ENCODE measurements at regions of chr9 and their contacts with region 1.

Region 1: DNA sequence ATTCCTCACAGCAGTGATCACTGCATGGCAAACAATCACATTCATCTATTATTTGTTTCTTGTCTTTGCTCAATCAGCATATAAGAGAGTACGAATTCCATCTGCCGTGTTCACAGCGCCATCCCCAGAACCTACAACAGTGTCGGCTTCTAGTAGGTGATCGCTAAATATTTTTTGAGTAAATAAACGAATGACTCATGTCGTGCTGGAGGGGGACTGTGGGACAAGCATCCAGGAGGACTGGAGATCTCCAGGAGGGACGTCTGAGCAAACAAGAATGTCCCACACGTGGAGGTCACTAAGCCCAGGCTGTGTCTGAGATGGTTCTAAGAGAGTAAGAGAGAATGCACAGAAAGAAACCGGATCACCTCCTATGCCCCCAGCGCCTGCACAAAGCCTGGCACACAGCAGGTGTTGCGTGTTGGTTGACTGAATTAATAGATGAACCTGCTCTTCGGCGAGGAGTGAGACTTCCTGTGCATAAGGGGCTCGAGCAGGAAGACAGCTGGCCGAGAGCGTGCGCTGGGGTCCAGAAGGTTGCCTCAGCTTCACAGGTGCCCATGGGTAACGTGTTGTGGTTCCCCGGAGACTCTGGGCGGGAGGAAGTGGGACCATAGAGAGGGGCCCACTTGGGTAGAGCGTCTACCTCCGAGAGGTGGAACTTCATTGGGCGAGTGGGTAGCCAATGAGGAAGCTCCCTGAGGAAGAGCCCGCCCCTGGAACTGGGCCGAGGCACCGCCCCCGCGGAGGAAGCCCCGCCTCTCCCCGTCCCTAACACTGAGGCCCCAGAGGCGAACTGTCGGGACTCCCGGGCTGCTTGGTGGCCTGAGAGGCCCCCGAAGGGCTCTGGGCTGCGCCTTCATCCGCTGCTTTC is 193.0 kb downstream of the MELK start:
- DNase-seq: peak; percentile 77 to 95 (median 90)
- ATAC-seq: peak; percentile 99
- H3K4me3 ChIP-seq: peak overlapping the region; percentile 63
- H3K4me3 Mint-ChIP-seq: no peak overlapping the region
- H3K27ac ChIP-seq: peak overlapping the region in 1 of 2 donors; percentile 40
- H3K27ac Mint-ChIP-seq: no peak overlapping the region
- H3K4me1 ChIP-seq: peaks cover 17% of the 10 kb centered on the region
- H3K4me1 Mint-ChIP-seq: no peaks in the 10 kb centered on the region
- H3K27me3 ChIP-seq: peaks cover 2 to 3% of the 10 kb centered on the region in 2 experiments
- H3K27me3 Mint-ChIP-seq: peaks cover 16% of the 10 kb centered on the region
- CTCF ChIP-seq: no peak

Region 2: DNA sequence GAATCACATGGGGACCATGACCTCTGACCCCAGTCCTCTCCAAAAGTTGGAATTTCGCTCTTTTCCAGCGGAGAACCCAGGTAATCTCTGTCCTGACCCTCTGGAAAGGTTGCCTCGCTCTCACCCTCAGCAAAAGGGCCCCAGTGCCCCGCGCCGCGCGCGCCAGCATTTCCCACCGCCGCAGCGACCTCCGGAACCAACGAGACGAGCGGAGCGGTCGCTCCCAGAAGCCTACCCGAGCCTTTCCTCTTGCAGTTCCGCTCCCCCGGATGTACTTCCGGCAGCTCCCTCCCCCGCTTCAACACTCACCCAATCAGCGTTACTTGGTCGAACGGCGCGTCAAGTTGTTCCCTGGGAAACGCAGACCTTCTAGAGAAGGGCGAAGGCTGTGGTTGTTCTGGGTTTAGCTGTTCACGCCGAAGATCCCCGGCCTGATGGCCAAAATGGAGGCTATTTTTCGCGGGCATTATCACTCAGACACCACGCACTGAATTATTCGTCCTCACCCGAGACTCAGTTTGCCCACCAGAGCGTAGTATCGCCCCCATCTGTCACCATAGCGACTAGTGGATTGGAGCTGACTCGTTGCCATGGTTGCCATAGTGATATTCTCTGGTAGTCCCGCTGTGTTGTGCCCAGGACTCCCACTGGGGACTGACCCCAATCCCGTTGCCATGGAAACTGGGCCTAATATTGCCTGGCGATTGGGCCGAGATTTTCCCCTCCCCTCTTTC is 1662.6 kb before region 1 on chr9 and contains the start of gene STOML2:
- CTCF ChIA-PET with region 1: no interaction called
- POLR2A ChIA-PET with region 1: no interaction called
- intact Hi-C with region 1: loop called in 1 of 2 experiments (anchors 10 kb)
- DNase-seq: peak; percentile 84 to 97 (median 90)
- ATAC-seq: peak; percentile 98
- H3K4me3 ChIP-seq: peak within 1 kb of the TSS; percentile 99
- H3K4me3 Mint-ChIP-seq: peak within 1 kb of the TSS; percentile 92
- H3K27ac ChIP-seq: peak within 1 kb of the TSS; percentile 77 to 94
- H3K27ac Mint-ChIP-seq: peak within 1 kb of the TSS; percentile 89
- H3K4me1 ChIP-seq: peaks cover 28% of the 10 kb centered on the region
- H3K4me1 Mint-ChIP-seq: peaks cover 36% of the 10 kb centered on the region
- H3K27me3 ChIP-seq: no peaks in the 10 kb centered on the region
- H3K27me3 Mint-ChIP-seq: no peaks in the 10 kb centered on the region
- CTCF ChIP-seq: no peak
- total RNA-seq, gene STOML2: 29.8 to 30.5 TPM

Region 3: GRCh38 chr9:36036780-36037548 is 728.7 kb before region 1 on chr9 and contains the start of gene RECK:
- CTCF ChIA-PET with region 1: no interaction called
- POLR2A ChIA-PET with region 1: no interaction called
- intact Hi-C with region 1: loop called in 1 of 2 experiments (anchors 5 kb)
- DNase-seq: peak; percentile 68 to 92 (median 84)
- ATAC-seq: peak; percentile 94
- H3K4me3 ChIP-seq: peak within 1 kb of the TSS; percentile 85
- H3K4me3 Mint-ChIP-seq: peak within 1 kb of the TSS; percentile 94
- H3K27ac ChIP-seq: no peak within 1 kb of the TSS
- H3K27ac Mint-ChIP-seq: peak within 1 kb of the TSS; percentile 44
- H3K4me1 ChIP-seq: peaks cover 22% of the 10 kb centered on the region
- H3K4me1 Mint-ChIP-seq: peaks cover 45% of the 10 kb centered on the region
- H3K27me3 ChIP-seq: no peaks in the 10 kb centered on the region
- H3K27me3 Mint-ChIP-seq: no peaks in the 10 kb centered on the region
- CTCF ChIP-seq: no peak
- total RNA-seq, gene RECK: 9.3 to 9.8 TPM

Region 4: GRCh38 chr9:37119907-37120842 is 354.5 kb after region 1 on chr9 and contains the start of gene ZCCHC7:
- CTCF ChIA-PET with region 1: no interaction called
- POLR2A ChIA-PET with region 1: interaction called, 4 read pairs
- intact Hi-C with region 1: loop called in 1 of 2 experiments (anchors 10 kb)
- DNase-seq: peak; percentile 95 to 98 (median 97)
- ATAC-seq: peak; percentile 95
- H3K4me3 ChIP-seq: peak within 1 kb of the TSS; percentile 79
- H3K4me3 Mint-ChIP-seq: peak within 1 kb of the TSS; percentile 95
- H3K27ac ChIP-seq: peak within 1 kb of the TSS; percentile 87 to 94
- H3K27ac Mint-ChIP-seq: peak within 1 kb of the TSS; percentile 92
- H3K4me1 ChIP-seq: peaks cover 21% of the 10 kb centered on the region
- H3K4me1 Mint-ChIP-seq: peaks cover 42% of the 10 kb centered on the region
- H3K27me3 ChIP-seq: no peaks in the 10 kb centered on the region
- H3K27me3 Mint-ChIP-seq: no peaks in the 10 kb centered on the region
- CTCF ChIP-seq: no peak
- total RNA-seq, gene ZCCHC7: 40.7 to 41.0 TPM

Region 5: GRCh38 chr9:37422289-37423104 is 656.8 kb after region 1 on chr9 and contains the start of gene GRHPR:
- CTCF ChIA-PET with region 1: no interaction called
- POLR2A ChIA-PET with region 1: no interaction called
- intact Hi-C with region 1: loop called in 1 of 2 experiments (anchors 5 kb)
- DNase-seq: peak; percentile 80 to 95 (median 88)
- ATAC-seq: peak; percentile 99
- H3K4me3 ChIP-seq: peak within 1 kb of the TSS; percentile 86
- H3K4me3 Mint-ChIP-seq: peak within 1 kb of the TSS; percentile 96
- H3K27ac ChIP-seq: peak within 1 kb of the TSS; percentile 73 to 80
- H3K27ac Mint-ChIP-seq: peak within 1 kb of the TSS; percentile 90
- H3K4me1 ChIP-seq: peaks cover 34% of the 10 kb centered on the region
- H3K4me1 Mint-ChIP-seq: peaks cover 28% of the 10 kb centered on the region
- H3K27me3 ChIP-seq: no peaks in the 10 kb centered on the region
- H3K27me3 Mint-ChIP-seq: no peaks in the 10 kb centered on the region
- CTCF ChIP-seq: no peak
- total RNA-seq, gene GRHPR: 29.0 to 29.6 TPM

Region 6: GRCh38 chr9:37903647-37904444 is 1138.1 kb after region 1 on chr9 and contains the start of gene SLC25A51:
- CTCF ChIA-PET with region 1: no interaction called
- POLR2A ChIA-PET with region 1: no interaction called
- intact Hi-C with region 1: loop called in 1 of 2 experiments (anchors 5 kb)
- DNase-seq: peak; percentile 93 to 98 (median 95)
- ATAC-seq: peak; percentile 87
- H3K4me3 ChIP-seq: peak within 1 kb of the TSS; percentile 61
- H3K4me3 Mint-ChIP-seq: peak within 1 kb of the TSS; percentile 100
- H3K27ac ChIP-seq: peak within 1 kb of the TSS; percentile 57 to 70
- H3K27ac Mint-ChIP-seq: peak within 1 kb of the TSS; percentile 97
- H3K4me1 ChIP-seq: peaks cover 23% of the 10 kb centered on the region
- H3K4me1 Mint-ChIP-seq: peaks cover 33% of the 10 kb centered on the region
- H3K27me3 ChIP-seq: no peaks in the 10 kb centered on the region
- H3K27me3 Mint-ChIP-seq: no peaks in the 10 kb centered on the region
- CTCF ChIP-seq: peak; percentile 88
- total RNA-seq, gene SLC25A51: 13.3 to 13.8 TPM

Measured in CD4-positive, alpha-beta T cell (primary cell).